ENCODE measurements at regions of chr20 and their contacts with region 1.

Region 1: GRCh38 chr20:50070991-50071888 is 41.7 kb downstream of the UBE2V1 start:
- DNase-seq: peak; percentile 91
- H3K4me3 Mint-ChIP-seq: peak overlapping the region; percentile 47
- H3K27ac Mint-ChIP-seq: no peak overlapping the region
- H3K4me1 Mint-ChIP-seq: peaks cover 5% of the 10 kb centered on the region
- H3K27me3 Mint-ChIP-seq: peaks cover 4% of the 10 kb centered on the region

Region 2: GRCh38 chr20:49982346-49983122 is 88.7 kb before region 1 on chr20 and contains the start of gene SNAI1:
- CTCF ChIA-PET with region 1: interaction called, 148 read pairs
- POLR2A ChIA-PET with region 1: interaction called, 4 read pairs
- DNase-seq: peak; percentile 87
- H3K4me3 Mint-ChIP-seq: peak within 1 kb of the TSS; percentile 56
- H3K27ac Mint-ChIP-seq: peak within 1 kb of the TSS; percentile 60
- H3K4me1 Mint-ChIP-seq: peaks cover 24% of the 10 kb centered on the region
- H3K27me3 Mint-ChIP-seq: peaks cover 21% of the 10 kb centered on the region
- total RNA-seq, gene SNAI1: 0.15 TPM in 1 of 2 experiments, not detected in the other

Region 3: DNA sequence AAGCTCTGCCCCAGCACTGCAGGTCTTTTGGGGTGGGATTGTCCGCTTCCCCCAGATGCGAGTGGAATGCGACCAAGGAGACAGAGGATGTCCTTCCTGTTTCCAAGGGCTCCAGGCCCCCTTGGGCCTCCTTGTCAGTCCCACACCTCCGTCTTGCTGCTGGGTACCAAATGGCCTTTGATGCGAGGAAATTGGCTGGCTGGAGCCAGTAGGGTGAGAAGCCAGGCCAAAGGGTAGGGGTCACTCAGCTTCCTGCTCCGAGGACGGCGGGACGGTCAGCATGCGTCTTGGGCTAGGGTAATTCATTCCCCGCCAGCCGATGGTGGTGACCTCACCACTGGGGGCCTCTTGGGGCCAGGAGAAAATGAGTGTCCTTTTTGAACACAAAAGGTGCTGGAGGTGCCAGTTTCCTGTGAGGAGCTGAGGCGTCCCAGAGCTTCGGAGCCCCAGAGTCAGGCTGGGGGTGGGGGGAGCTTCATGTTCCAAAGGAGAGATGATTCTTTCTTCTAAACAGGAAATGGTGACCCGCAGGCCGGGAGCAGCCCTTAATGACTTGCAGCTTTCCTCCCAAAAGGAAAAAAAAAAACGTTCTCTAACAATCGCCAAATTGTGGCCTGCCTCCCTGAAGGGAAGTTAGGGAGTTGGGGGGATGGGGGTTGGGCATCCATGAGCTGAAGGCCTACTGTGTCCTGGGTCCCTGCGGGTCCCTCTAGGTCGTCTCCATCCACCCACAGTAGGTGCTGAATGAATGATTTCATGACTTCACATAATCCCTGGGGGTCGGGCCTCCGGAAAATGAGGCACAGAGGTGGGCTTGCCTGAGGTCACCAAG is 81.8 kb before region 1 on chr20:
- CTCF ChIA-PET with region 1: interaction called, 10 read pairs
- POLR2A ChIA-PET with region 1: no interaction called
- DNase-seq: no peak
- H3K4me3 Mint-ChIP-seq: no peak overlapping the region
- H3K27ac Mint-ChIP-seq: no peak overlapping the region
- H3K4me1 Mint-ChIP-seq: peaks cover 9% of the 10 kb centered on the region
- H3K27me3 Mint-ChIP-seq: peaks cover 5% of the 10 kb centered on the region

Region 4: GRCh38 chr20:50085452-50086365 is 14.5 kb after region 1 on chr20:
- CTCF ChIA-PET with region 1: interaction called, 24 read pairs
- POLR2A ChIA-PET with region 1: no interaction called
- DNase-seq: peak; percentile 56
- H3K4me3 Mint-ChIP-seq: peak overlapping the region; percentile 37
- H3K27ac Mint-ChIP-seq: peak overlapping the region; percentile 74
- H3K4me1 Mint-ChIP-seq: peaks cover 23% of the 10 kb centered on the region
- H3K27me3 Mint-ChIP-seq: no peaks in the 10 kb centered on the region

Region 5: GRCh38 chr20:50110141-50110925 is 39.1 kb after region 1 on chr20:
- CTCF ChIA-PET with region 1: interaction called, 14 read pairs
- POLR2A ChIA-PET with region 1: no interaction called
- DNase-seq: peak; percentile 59
- H3K4me3 Mint-ChIP-seq: peak overlapping the region; percentile 99
- H3K27ac Mint-ChIP-seq: peak overlapping the region; percentile 90
- H3K4me1 Mint-ChIP-seq: peaks cover 83% of the 10 kb centered on the region
- H3K27me3 Mint-ChIP-seq: no peaks in the 10 kb centered on the region

Region 6: GRCh38 chr20:50115591-50116372 is 44.5 kb after region 1 on chr20:
- CTCF ChIA-PET with region 1: interaction called, 12 read pairs
- POLR2A ChIA-PET with region 1: interaction called, 3 read pairs
- DNase-seq: peak; percentile 93
- H3K4me3 Mint-ChIP-seq: peak overlapping the region; percentile 81
- H3K27ac Mint-ChIP-seq: peak overlapping the region; percentile 92
- H3K4me1 Mint-ChIP-seq: peaks cover 52% of the 10 kb centered on the region
- H3K27me3 Mint-ChIP-seq: no peaks in the 10 kb centered on the region

Measured in activated CD4-positive, alpha-beta T cell treated with anti-CD3 and anti-CD28 coated beads, Interleukin-2, amount 10 ng/mL, durations not matched to agents 7 days and 5 days (primary cell).